Activated CD4-positive, alpha-beta memory T cell treated with anti-CD3 and anti-CD28 coated beads for 36 hours (primary cell): ENCODE measurements at regions of chr7 and their contacts with region 1.

Region 1: DNA sequence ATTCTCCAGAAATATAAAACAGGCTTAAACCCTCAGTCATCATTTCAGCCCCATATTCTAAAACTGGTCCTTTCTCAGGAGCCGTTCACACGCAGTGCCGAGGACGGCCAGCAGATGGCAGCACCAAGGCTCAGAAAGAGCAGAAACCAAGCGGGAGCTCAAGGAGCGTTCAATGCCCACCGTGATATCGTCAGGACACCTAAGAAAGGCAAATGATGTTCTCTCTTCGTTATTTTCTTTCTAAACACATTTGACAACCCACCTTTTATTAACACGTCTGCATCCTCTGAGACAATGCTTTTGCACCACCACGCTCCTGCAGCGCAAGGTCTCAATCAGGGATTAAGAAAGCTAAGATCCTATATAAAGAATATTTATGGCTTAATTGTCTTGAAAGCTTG is 45.7 kb upstream of the RBM33 start:
- DNase-seq: peak; percentile 88
- H3K4me3 Mint-ChIP-seq: no peak overlapping the region
- H3K27ac Mint-ChIP-seq: no peak overlapping the region
- H3K4me1 Mint-ChIP-seq: peaks cover 12% of the 10 kb centered on the region
- H3K27me3 Mint-ChIP-seq: peaks cover 21% of the 10 kb centered on the region

Region 2: GRCh38 chr7:155141562-155141961 is 457.2 kb before region 1 on chr7:
- CTCF ChIA-PET with region 1: no interaction called
- POLR2A ChIA-PET with region 1: no interaction called
- intact Hi-C with region 1: no loop called
- DNase-seq: no peak
- H3K4me3 Mint-ChIP-seq: no peak overlapping the region
- H3K27ac Mint-ChIP-seq: no peak overlapping the region
- H3K4me1 Mint-ChIP-seq: no peaks in the 10 kb centered on the region
- H3K27me3 Mint-ChIP-seq: peaks cover 28% of the 10 kb centered on the region

Region 3: GRCh38 chr7:155610633-155611193 is 11.9 kb after region 1 on chr7:
- CTCF ChIA-PET with region 1: interaction called, 19 read pairs
- POLR2A ChIA-PET with region 1: no interaction called
- intact Hi-C with region 1: no loop called
- DNase-seq: no peak
- H3K4me3 Mint-ChIP-seq: no peak overlapping the region
- H3K27ac Mint-ChIP-seq: no peak overlapping the region
- H3K4me1 Mint-ChIP-seq: no peaks in the 10 kb centered on the region
- H3K27me3 Mint-ChIP-seq: peaks cover 12% of the 10 kb centered on the region

Region 4: GRCh38 chr7:155702616-155703015 is 103.8 kb after region 1 on chr7:
- CTCF ChIA-PET with region 1: interaction called, 33 read pairs
- POLR2A ChIA-PET with region 1: no interaction called
- intact Hi-C with region 1: loop called (anchors 1 kb)
- DNase-seq: no peak
- H3K4me3 Mint-ChIP-seq: no peak overlapping the region
- H3K27ac Mint-ChIP-seq: peak overlapping the region; percentile 29
- H3K4me1 Mint-ChIP-seq: peaks cover 33% of the 10 kb centered on the region
- H3K27me3 Mint-ChIP-seq: no peaks in the 10 kb centered on the region

Region 5: GRCh38 chr7:155738652-155739537 is 140.1 kb after region 1 on chr7:
- CTCF ChIA-PET with region 1: interaction called, 58 read pairs
- POLR2A ChIA-PET with region 1: interaction called, 4 read pairs
- intact Hi-C with region 1: loop called (anchors 1 kb)
- DNase-seq: peak; percentile 83
- H3K4me3 Mint-ChIP-seq: no peak overlapping the region
- H3K27ac Mint-ChIP-seq: peak overlapping the region; percentile 39
- H3K4me1 Mint-ChIP-seq: peaks cover 51% of the 10 kb centered on the region
- H3K27me3 Mint-ChIP-seq: no peaks in the 10 kb centered on the region

Region 6: GRCh38 chr7:155763691-155764437 is 165.1 kb after region 1 on chr7:
- CTCF ChIA-PET with region 1: interaction called, 227 read pairs
- POLR2A ChIA-PET with region 1: no interaction called
- intact Hi-C with region 1: loop called (anchors 1 kb)
- DNase-seq: peak; percentile 80
- H3K4me3 Mint-ChIP-seq: peak overlapping the region; percentile 76
- H3K27ac Mint-ChIP-seq: peak overlapping the region; percentile 99
- H3K4me1 Mint-ChIP-seq: peaks cover 52% of the 10 kb centered on the region
- H3K27me3 Mint-ChIP-seq: no peaks in the 10 kb centered on the region

Region 7: DNA sequence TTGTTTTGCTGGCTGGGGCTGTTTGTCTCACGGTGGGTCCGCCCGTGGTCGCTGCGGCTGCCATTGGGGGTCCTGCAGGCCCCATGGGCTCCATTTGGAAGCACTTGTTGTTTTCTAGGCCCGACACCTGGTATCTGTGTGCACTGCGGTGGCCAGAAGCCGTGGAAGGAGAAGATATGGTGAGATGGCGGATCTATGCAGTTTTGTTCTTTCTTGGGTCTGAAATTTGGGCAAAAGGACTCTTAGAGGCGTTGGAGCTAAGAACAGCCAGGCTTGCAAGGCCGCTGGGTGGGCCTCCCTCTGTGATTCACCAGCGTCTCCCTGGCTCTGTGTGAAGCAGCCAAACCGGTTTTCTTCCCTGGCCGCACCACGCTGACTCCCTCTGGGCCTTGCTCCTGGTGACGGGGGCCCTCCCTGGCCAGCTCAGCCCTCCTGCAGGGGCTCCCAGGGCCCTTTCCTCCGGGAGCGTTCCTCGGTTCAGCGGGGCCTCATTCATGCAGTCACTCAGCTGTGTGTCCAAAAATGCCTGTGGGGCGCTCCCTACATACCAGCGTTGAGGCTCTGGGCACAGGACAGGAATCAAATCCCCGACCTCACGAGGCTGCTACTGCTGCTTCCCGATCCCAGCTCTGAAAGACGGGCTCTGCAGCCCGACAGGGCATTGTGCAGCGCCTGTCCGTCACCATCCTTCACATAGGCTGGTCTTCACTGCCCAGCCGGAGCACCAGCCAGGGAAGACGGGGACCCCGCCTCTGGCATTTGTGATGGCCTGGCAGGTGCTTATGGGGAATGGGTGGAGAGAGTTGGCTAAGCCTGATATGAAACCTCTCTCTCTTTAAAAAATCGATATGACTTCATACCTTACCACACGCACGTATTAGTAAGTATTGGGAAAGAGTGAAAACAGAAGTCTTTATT is 323.3 kb after region 1 on chr7:
- CTCF ChIA-PET with region 1: no interaction called
- POLR2A ChIA-PET with region 1: no interaction called
- intact Hi-C with region 1: no loop called
- DNase-seq: no peak
- H3K4me3 Mint-ChIP-seq: no peak overlapping the region
- H3K27ac Mint-ChIP-seq: no peak overlapping the region
- H3K4me1 Mint-ChIP-seq: no peaks in the 10 kb centered on the region
- H3K27me3 Mint-ChIP-seq: peaks cover 5% of the 10 kb centered on the region